Activated B cell treated with CpG ODN at 0.5 μM for 24 hours (primary cell): ENCODE measurements at regions of chr7 and their contacts with region 1.

Region 1: GRCh38 chr7:44123190-44124003 is at the start of gene POLD2:
- DNase-seq: peak; percentile 96
- ATAC-seq: peak; percentile 98
- H3K4me3 Mint-ChIP-seq: peak within 1 kb of the TSS; percentile 88
- H3K27ac Mint-ChIP-seq: peak within 1 kb of the TSS; percentile 79
- H3K4me1 Mint-ChIP-seq: peaks cover 25% of the 10 kb centered on the region
- H3K27me3 Mint-ChIP-seq: no peaks in the 10 kb centered on the region
- CTCF ChIP-seq: no peak
- total RNA-seq, gene POLD2: 146 and 147 TPM in 2 replicates

Region 2: DNA sequence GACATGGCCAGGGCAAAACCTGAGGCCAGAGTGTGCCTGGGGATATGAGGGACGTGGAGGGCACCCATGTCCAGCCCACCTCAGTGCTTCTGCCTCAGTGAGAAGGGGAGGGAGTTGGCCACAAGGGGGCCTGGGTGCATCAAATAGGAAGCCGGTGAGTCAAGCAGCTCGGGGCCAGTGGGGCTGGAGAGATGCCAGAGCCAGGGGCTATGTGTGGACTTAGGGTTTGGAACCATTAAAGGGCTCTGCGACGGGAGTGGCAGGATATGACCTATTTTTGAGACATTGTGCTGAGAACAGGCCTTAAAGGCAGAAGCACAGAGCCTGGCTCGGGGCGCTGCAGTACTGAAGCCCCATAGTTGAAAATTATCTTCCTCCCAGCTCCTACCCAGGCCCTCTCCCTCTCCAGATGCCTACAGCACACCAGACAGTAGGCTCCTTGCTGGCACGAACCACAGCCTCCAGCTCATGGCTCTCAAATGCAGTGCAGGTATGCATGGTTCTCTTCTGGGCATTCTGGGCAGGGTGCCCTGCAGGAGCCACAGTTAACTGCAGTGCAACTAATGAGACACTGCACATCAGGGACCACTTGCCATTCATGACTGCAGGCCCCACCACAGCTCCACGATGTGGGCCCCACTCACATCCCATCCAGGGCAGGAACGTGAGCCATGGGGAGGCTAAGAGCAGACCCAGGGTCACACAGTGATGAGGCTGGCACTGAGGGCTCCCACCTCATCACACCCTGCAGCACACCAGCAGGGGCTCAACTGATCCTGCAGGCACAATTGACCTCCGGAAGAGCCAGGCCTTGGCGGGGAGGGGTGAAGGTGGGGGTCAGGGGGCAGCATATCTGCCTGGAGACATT is 50.8 kb before region 1 on chr7:
- CTCF ChIA-PET with region 1: no interaction called
- POLR2A ChIA-PET with region 1: interaction called, 3 read pairs
- intact Hi-C with region 1: loop called (anchors 1 kb)
- DNase-seq: no peak
- ATAC-seq: peak; percentile 22
- H3K4me3 Mint-ChIP-seq: no peak overlapping the region
- H3K27ac Mint-ChIP-seq: peak overlapping the region; percentile 90
- H3K4me1 Mint-ChIP-seq: peaks cover 84% of the 10 kb centered on the region
- H3K27me3 Mint-ChIP-seq: no peaks in the 10 kb centered on the region
- CTCF ChIP-seq: no peak

Region 3: GRCh38 chr7:44097064-44097932 is 26.1 kb before region 1 on chr7:
- CTCF ChIA-PET with region 1: no interaction called
- POLR2A ChIA-PET with region 1: interaction called, 20 read pairs
- intact Hi-C with region 1: loop called (anchors 2 kb)
- DNase-seq: peak; percentile 53
- ATAC-seq: peak; percentile 89
- H3K4me3 Mint-ChIP-seq: peak overlapping the region; percentile 15
- H3K27ac Mint-ChIP-seq: peak overlapping the region; percentile 91
- H3K4me1 Mint-ChIP-seq: peaks cover 79% of the 10 kb centered on the region
- H3K27me3 Mint-ChIP-seq: no peaks in the 10 kb centered on the region
- CTCF ChIP-seq: no peak

Region 4: GRCh38 chr7:44103923-44104859 is 19.2 kb before region 1 on chr7 and contains the start of gene AEBP1:
- CTCF ChIA-PET with region 1: no interaction called
- POLR2A ChIA-PET with region 1: interaction called, 7 read pairs
- intact Hi-C with region 1: loop called (anchors 2 kb)
- DNase-seq: no peak
- ATAC-seq: peak; percentile 66
- H3K4me3 Mint-ChIP-seq: peak within 1 kb of the TSS; percentile 81
- H3K27ac Mint-ChIP-seq: peak within 1 kb of the TSS; percentile 72
- H3K4me1 Mint-ChIP-seq: peaks cover 57% of the 10 kb centered on the region
- H3K27me3 Mint-ChIP-seq: peaks cover 2% of the 10 kb centered on the region
- CTCF ChIP-seq: no peak
- total RNA-seq, gene AEBP1: 17.4 and 21.7 TPM in 2 replicates

Region 5: GRCh38 chr7:44145969-44146911 is 22.8 kb after region 1 on chr7:
- CTCF ChIA-PET with region 1: interaction called, 4 read pairs
- POLR2A ChIA-PET with region 1: no interaction called
- intact Hi-C with region 1: loop called (anchors 1 kb)
- DNase-seq: peak; percentile 55
- ATAC-seq: peak; percentile 85
- H3K4me3 Mint-ChIP-seq: peak overlapping the region; percentile 78
- H3K27ac Mint-ChIP-seq: no peak overlapping the region
- H3K4me1 Mint-ChIP-seq: peaks cover 18% of the 10 kb centered on the region
- H3K27me3 Mint-ChIP-seq: no peaks in the 10 kb centered on the region
- CTCF ChIP-seq: no peak